Breast epithelium (tissue), 4 donors: ENCODE measurements at regions of chr12 and their contacts with region 1.

Region 1: GRCh38 chr12:117450209-117450608 is 88.8 kb upstream of the NOS1 start:
- DNase-seq: no peak
- H3K4me3 ChIP-seq: no peak overlapping the region
- H3K27ac ChIP-seq: no peak overlapping the region
- H3K4me1 ChIP-seq: no peaks in the 10 kb centered on the region
- H3K27me3 ChIP-seq: no peaks in the 10 kb centered on the region
- CTCF ChIP-seq: no peak
- POLR2A ChIP-seq: no peak

Region 2: DNA sequence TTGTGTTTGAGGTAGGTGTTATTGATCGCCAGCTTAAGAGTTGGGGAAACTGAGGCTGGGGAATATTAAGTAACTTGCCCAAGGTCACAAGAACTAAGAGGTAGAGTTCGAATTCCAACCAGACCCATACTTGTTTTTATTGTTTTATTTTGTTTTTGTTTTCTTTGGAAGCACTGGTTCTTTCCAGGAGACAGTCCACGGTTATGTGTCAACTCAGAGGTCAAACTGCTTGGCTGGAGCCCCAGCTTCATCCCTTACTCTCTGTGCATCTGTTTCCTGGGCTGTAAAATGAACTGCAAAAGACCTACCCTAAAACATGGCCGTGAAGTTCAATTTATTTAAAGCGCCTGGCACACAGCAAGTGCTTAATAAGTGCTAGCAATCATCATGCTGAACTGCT is 965.4 kb before region 1 on chr12:
- intact Hi-C with region 1: loop called (anchors 10 kb)
- DNase-seq: no peak
- H3K4me3 ChIP-seq: no peak overlapping the region
- H3K27ac ChIP-seq: no peak overlapping the region
- H3K4me1 ChIP-seq: no peaks in the 10 kb centered on the region
- H3K27me3 ChIP-seq: no peaks in the 10 kb centered on the region
- CTCF ChIP-seq: no peak
- POLR2A ChIP-seq: no peak

Region 3: GRCh38 chr12:117098361-117099217 is 351.6 kb before region 1 on chr12:
- intact Hi-C with region 1: no loop called
- DNase-seq: no peak
- H3K4me3 ChIP-seq: peak overlapping the region; percentile 43 to 79 (median 70)
- H3K27ac ChIP-seq: peak overlapping the region; percentile 6 to 22
- H3K4me1 ChIP-seq: no peaks in the 10 kb centered on the region
- H3K27me3 ChIP-seq: peaks cover 2 to 15% of the 10 kb centered on the region in 2 donors
- CTCF ChIP-seq: no peak
- POLR2A ChIP-seq: no peak

Region 4: DNA sequence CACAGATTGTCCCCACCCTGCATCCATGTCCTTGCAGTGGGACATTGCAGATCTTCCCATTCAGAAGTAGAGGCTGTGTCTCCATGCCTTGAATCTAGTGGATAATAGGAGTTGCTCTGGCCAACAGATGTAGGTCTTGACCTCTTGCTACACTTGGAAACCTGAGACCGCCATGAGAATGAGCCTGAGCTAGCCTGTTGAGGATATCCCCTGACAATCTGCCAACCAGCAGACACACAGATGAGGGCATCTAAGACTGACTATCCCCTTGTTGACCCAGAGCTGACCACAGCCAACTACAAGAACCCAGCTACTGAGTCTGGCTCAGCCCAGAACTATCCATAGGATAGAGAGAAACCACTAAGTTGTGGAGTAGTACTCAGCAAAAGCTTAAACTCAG is 72.3 kb after region 1 on chr12:
- intact Hi-C with region 1: loop called (anchors 2 kb)
- DNase-seq: no peak
- H3K4me3 ChIP-seq: no peak overlapping the region
- H3K27ac ChIP-seq: no peak overlapping the region
- H3K4me1 ChIP-seq: no peaks in the 10 kb centered on the region
- H3K27me3 ChIP-seq: no peaks in the 10 kb centered on the region
- CTCF ChIP-seq: no peak
- POLR2A ChIP-seq: no peak